ENCODE measurements at regions of chr19 and their contacts with region 1.

Region 1: GRCh38 chr19:48044561-48044960 is 682 bp upstream of the CABP5 start:
- DNase-seq: no peak
- ATAC-seq: no peak
- H3K4me3 ChIP-seq: no peak overlapping the region
- H3K4me3 Mint-ChIP-seq: no peak overlapping the region
- H3K27ac ChIP-seq: no peak overlapping the region
- H3K27ac Mint-ChIP-seq: no peak overlapping the region
- H3K4me1 ChIP-seq: no peaks in the 10 kb centered on the region
- H3K4me1 Mint-ChIP-seq: no peaks in the 10 kb centered on the region
- H3K27me3 ChIP-seq: peaks cover 0 to 5% of the 10 kb centered on the region in 2 experiments
- H3K27me3 Mint-ChIP-seq: peaks cover 43% of the 10 kb centered on the region
- CTCF ChIP-seq: no peak

Region 2: GRCh38 chr19:47848823-47849473 is 195.6 kb before region 1 on chr19:
- CTCF ChIA-PET with region 1: no interaction called
- POLR2A ChIA-PET with region 1: no interaction called
- intact Hi-C with region 1: no loop called
- DNase-seq: peak in 5 of 9 experiments; percentile 1 to 38 (median 27)
- ATAC-seq: no peak
- H3K4me3 ChIP-seq: peak overlapping the region in 1 of 2 experiments; percentile 23
- H3K4me3 Mint-ChIP-seq: no peak overlapping the region
- H3K27ac ChIP-seq: no peak overlapping the region
- H3K27ac Mint-ChIP-seq: no peak overlapping the region
- H3K4me1 ChIP-seq: no peaks in the 10 kb centered on the region
- H3K4me1 Mint-ChIP-seq: peaks cover 6% of the 10 kb centered on the region
- H3K27me3 ChIP-seq: peaks cover 8 to 17% of the 10 kb centered on the region in 2 experiments
- H3K27me3 Mint-ChIP-seq: peaks cover 50% of the 10 kb centered on the region
- CTCF ChIP-seq: peak; percentile 19

Region 3: DNA sequence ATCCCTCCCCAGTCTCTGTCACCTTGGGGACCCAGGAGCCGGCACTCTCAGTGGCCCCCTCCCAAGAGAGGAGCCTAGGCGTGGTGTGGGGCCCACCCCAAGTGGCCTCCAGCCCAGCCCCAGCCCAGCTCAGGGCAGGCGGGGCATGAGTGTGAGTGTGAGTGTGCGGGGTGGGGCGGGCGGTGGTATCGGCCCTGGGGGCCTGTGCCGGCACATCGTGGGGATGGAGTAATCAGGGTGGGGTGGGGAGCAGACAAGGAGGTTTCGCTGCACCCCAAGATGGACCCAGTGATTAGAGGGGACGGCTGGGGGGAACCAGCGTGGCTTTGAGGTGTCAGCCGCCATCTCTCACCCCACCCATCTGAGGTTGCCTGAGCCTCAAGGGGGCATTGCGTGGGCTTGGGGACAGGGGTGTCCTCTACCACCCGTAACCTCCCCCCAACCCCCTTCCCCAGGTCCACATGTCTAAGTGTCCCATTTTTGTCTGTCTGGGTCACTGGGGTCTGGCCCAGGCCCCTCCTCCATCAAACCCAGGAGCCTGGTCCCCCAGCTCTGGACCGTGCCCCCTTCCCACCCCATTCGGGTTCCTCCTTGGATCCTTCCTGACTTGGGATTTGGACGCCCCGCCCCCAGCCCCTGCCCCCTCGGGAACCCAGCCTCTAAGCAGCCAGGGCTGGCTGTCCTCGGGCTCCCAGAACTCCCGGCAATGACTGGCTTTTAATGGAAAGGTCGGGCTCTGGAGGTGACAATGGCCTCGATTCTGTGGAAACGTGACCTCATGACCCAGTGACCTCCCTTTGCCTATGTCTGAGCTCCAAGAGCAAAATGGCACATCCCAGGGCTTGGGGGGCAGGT is 500.6 kb after region 1 on chr19:
- CTCF ChIA-PET with region 1: no interaction called
- POLR2A ChIA-PET with region 1: no interaction called
- intact Hi-C with region 1: loop called in 1 of 2 experiments (anchors 5 kb)
- DNase-seq: no peak
- ATAC-seq: no peak
- H3K4me3 ChIP-seq: no peak overlapping the region
- H3K4me3 Mint-ChIP-seq: no peak overlapping the region
- H3K27ac ChIP-seq: no peak overlapping the region
- H3K27ac Mint-ChIP-seq: no peak overlapping the region
- H3K4me1 ChIP-seq: no peaks in the 10 kb centered on the region
- H3K4me1 Mint-ChIP-seq: no peaks in the 10 kb centered on the region
- H3K27me3 ChIP-seq: peaks cover 0 to 5% of the 10 kb centered on the region in 2 experiments
- H3K27me3 Mint-ChIP-seq: no peaks in the 10 kb centered on the region
- CTCF ChIP-seq: no peak

Measured in CD8-positive, alpha-beta T cell (primary cell).